A549 (cell line): ENCODE measurements at regions of chr11 and their contacts with region 1.

Region 1: GRCh38 chr11:14300661-14301304 is 58.2 kb downstream of the RRAS2 start:
- DNase-seq: peak; percentile 69 to 75
- ATAC-seq: peak; percentile 97 to 98
- H3K4me3 ChIP-seq: no peak overlapping the region
- H3K27ac ChIP-seq: peak overlapping the region in 1 of 2 experiments; percentile 65; a peak in 3 of 6 replicates
- H3K4me1 ChIP-seq: peaks cover 7% of the 10 kb centered on the region; the same call in 2 of the 3 replicates
- CTCF ChIP-seq: peak; percentile 91
- EP300 ChIP-seq: no peak
- POLR2A ChIP-seq: no peak
- RAD21 ChIP-seq: peak; percentile 92 to 96

Region 2: GRCh38 chr11:14232640-14233039 is 68.1 kb before region 1 on chr11:
- CTCF ChIA-PET with region 1: no interaction called
- POLR2A ChIA-PET with region 1: no interaction called
- DNase-seq: peak; percentile 11 to 41
- ATAC-seq: peak; percentile 55 to 85; a peak in 4 of 6 replicates
- H3K4me3 ChIP-seq: no peak overlapping the region
- H3K27ac ChIP-seq: no peak overlapping the region
- H3K4me1 ChIP-seq: no peaks in the 10 kb centered on the region
- CTCF ChIP-seq: peak; percentile 39
- EP300 ChIP-seq: no peak
- POLR2A ChIP-seq: no peak
- RAD21 ChIP-seq: peak in 1 of 2 experiments; percentile 22; a peak in 1 of 5 replicates

Region 3: GRCh38 chr11:14258221-14258935 is 42.4 kb before region 1 on chr11:
- CTCF ChIA-PET with region 1: no interaction called
- POLR2A ChIA-PET with region 1: no interaction called
- DNase-seq: peak; percentile 44 to 74
- ATAC-seq: peak; percentile 74 to 78
- H3K4me3 ChIP-seq: no peak overlapping the region
- H3K27ac ChIP-seq: peak overlapping the region; percentile 21 to 77
- H3K4me1 ChIP-seq: peaks cover 20% of the 10 kb centered on the region
- CTCF ChIP-seq: no peak
- EP300 ChIP-seq: peak in 1 of 2 experiments; percentile 59; a peak in 2 of 5 replicates
- POLR2A ChIP-seq: no peak
- RAD21 ChIP-seq: 0 out of 5 replicates have a peak, but pooled peaks of 1 of the 2 experiments have one; percentile 17

Region 4: GRCh38 chr11:14329702-14330101 is 28.9 kb after region 1 on chr11:
- CTCF ChIA-PET with region 1: interaction called, 11 read pairs
- POLR2A ChIA-PET with region 1: no interaction called
- DNase-seq: no peak
- ATAC-seq: no peak
- H3K4me3 ChIP-seq: no peak overlapping the region
- H3K27ac ChIP-seq: no peak overlapping the region
- H3K4me1 ChIP-seq: peaks cover 16% of the 10 kb centered on the region
- CTCF ChIP-seq: no peak
- EP300 ChIP-seq: no peak
- POLR2A ChIP-seq: no peak
- RAD21 ChIP-seq: no peak

Region 5: GRCh38 chr11:14358729-14359439 is 58.1 kb after region 1 on chr11 and contains the start of gene RRAS2:
- CTCF ChIA-PET with region 1: interaction called, 19 read pairs
- POLR2A ChIA-PET with region 1: interaction called, 10 read pairs
- DNase-seq: peak; percentile 70 to 78
- ATAC-seq: peak; percentile 88 to 90
- H3K4me3 ChIP-seq: peak within 1 kb of the TSS; percentile 84
- H3K27ac ChIP-seq: peak within 1 kb of the TSS; percentile 86 to 99
- H3K4me1 ChIP-seq: peaks cover 12% of the 10 kb centered on the region; the same call in 2 of the 3 replicates
- CTCF ChIP-seq: no peak
- EP300 ChIP-seq: no peak
- POLR2A ChIP-seq: peak; percentile 92
- RAD21 ChIP-seq: 0 out of 5 replicates have a peak, but pooled peaks of 1 of the 2 experiments have one; percentile 9
- polyA plus RNA-seq, gene RRAS2: 39.7 and 48.2 TPM in 2 replicates

Region 6: GRCh38 chr11:14413307-14414069 is 112.7 kb after region 1 on chr11:
- CTCF ChIA-PET with region 1: interaction called, 127 read pairs
- POLR2A ChIA-PET with region 1: interaction called, 4 read pairs
- DNase-seq: peak in 1 of 2 experiments; percentile 20
- ATAC-seq: peak in 1 of 2 experiments; percentile 63; a peak in 3 of 6 replicates
- H3K4me3 ChIP-seq: no peak overlapping the region
- H3K27ac ChIP-seq: peak overlapping the region in 1 of 2 experiments; percentile 1; a peak in 1 of 6 replicates
- H3K4me1 ChIP-seq: peaks cover 26% of the 10 kb centered on the region
- CTCF ChIP-seq: no peak
- EP300 ChIP-seq: no peak
- POLR2A ChIP-seq: no peak
- RAD21 ChIP-seq: 0 out of 5 replicates have a peak, but pooled peaks of 1 of the 2 experiments have one; percentile 4

Region 7: GRCh38 chr11:14454861-14455632 is 154.3 kb after region 1 on chr11:
- CTCF ChIA-PET with region 1: interaction called, 258 read pairs
- POLR2A ChIA-PET with region 1: interaction called, 8 read pairs
- DNase-seq: peak in 1 of 2 experiments; percentile 37
- ATAC-seq: peak; percentile 63 to 74; a peak in 5 of 6 replicates
- H3K4me3 ChIP-seq: no peak overlapping the region
- H3K27ac ChIP-seq: peak overlapping the region in 1 of 2 experiments; percentile 63; a peak in 3 of 6 replicates
- H3K4me1 ChIP-seq: 0 out of 3 replicates have a peak, but pooled peaks cover 3% of the 10 kb centered on the region
- CTCF ChIP-seq: peak; percentile 88
- EP300 ChIP-seq: no peak
- POLR2A ChIP-seq: no peak
- RAD21 ChIP-seq: peak; percentile 66 to 68

Region 8: GRCh38 chr11:14529321-14529720 is 228.5 kb after region 1 on chr11:
- CTCF ChIA-PET with region 1: no interaction called
- POLR2A ChIA-PET with region 1: no interaction called
- DNase-seq: no peak
- ATAC-seq: no peak
- H3K4me3 ChIP-seq: no peak overlapping the region
- H3K27ac ChIP-seq: no peak overlapping the region
- H3K4me1 ChIP-seq: peaks cover 8% of the 10 kb centered on the region
- CTCF ChIP-seq: no peak
- EP300 ChIP-seq: no peak
- POLR2A ChIP-seq: no peak
- RAD21 ChIP-seq: no peak